ENCODE measurements at regions of chr11 and their contacts with region 1.

Region 1: DNA sequence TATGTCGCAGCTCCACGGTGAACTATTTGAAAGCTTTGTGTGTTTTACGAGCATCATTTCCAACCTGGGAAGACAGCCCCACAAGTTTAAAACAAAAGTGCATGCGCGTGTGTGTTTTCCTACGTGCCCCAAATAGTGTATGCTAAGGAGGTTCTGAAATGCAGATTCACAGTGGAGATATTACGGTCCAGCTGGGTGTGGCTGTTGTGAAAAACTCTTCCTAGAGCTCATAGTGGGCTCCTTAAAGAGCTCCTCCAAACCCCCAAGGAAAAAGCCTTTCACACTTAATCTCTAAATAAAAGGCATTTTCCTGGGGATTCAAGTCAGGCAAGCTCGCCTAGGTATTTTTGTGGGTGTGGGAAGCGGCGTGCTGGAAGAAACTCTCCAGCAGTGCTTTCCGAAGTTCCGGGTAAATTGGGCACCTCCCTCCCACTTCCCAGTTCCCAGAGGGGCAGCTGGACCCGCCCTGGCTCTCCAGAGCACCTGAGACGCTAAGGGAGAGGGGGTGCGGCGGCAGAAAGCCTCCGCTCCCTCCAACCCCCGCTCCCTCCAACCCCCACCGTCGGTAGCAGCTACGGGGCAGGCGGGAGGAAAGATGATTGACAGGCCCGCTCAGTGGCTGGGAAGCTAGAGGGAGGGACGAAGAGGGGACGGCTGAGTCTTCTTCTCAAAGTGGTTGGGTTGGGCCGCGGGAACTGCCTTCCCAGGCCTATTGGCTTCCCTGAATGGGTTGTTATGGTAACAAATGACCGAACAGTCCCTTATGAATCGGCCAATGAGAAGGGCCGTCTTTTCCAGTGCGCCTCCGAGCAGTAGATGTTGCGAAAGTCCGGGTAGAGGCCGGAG is 558 bp upstream of the PCF11 start:
- DNase-seq: peak; percentile 100
- H3K4me3 ChIP-seq: peak overlapping the region; percentile 51 to 89 (median 76)
- H3K27ac ChIP-seq: peak overlapping the region; percentile 91
- H3K4me1 ChIP-seq: peaks cover 22% of the 10 kb centered on the region
- H3K27me3 ChIP-seq: no peaks in the 10 kb centered on the region
- CTCF ChIP-seq: no peak

Region 2: GRCh38 chr11:82927254-82927880 is 229.0 kb before region 1 on chr11:
- CTCF ChIA-PET with region 1: no interaction called
- dilution Hi-C with region 1: no loop called
- in situ Hi-C with region 1: no loop called
- intact Hi-C with region 1: loop called (anchors 5 kb)
- DNase-seq: peak; percentile 45
- H3K4me3 ChIP-seq: no peak overlapping the region
- H3K27ac ChIP-seq: no peak overlapping the region
- H3K4me1 ChIP-seq: no peaks in the 10 kb centered on the region
- H3K27me3 ChIP-seq: no peaks in the 10 kb centered on the region
- CTCF ChIP-seq: peak; percentile 82 to 83

Region 3: DNA sequence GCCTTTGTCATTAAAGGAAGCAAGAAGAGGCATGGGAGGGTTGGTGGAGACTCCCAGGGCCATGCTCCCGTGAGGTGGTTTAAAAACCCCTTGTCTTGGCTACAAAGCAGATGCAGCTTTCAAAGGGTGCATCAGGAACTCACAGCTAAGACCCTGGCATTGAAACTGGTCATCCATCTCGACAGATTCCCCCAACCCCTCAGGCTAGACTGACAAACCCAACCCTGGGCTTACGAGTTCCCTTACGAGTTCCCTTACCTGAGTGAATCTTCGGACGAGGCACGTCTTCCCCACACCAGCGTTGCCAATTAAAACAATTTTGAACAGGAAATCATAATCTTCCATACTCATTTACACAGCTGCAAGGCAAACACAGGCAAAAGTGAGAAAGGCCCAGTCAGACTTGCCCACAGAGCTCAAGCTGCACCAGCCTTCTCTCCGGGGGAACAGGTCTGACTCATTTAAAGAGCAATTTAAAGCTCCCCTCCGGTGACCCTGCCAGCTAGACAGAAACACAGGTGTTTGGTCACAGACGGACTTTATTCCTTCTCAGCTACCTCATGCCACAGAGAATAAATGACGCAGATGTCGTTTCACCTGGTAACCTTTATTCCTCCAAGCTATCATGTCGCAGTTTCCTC is 159.3 kb before region 1 on chr11:
- CTCF ChIA-PET with region 1: no interaction called
- dilution Hi-C with region 1: no loop called
- in situ Hi-C with region 1: no loop called
- intact Hi-C with region 1: loop called (anchors 5 kb)
- DNase-seq: peak; percentile 24
- H3K4me3 ChIP-seq: no peak overlapping the region
- H3K27ac ChIP-seq: no peak overlapping the region
- H3K4me1 ChIP-seq: peaks cover 3% of the 10 kb centered on the region
- H3K27me3 ChIP-seq: no peaks in the 10 kb centered on the region
- CTCF ChIP-seq: no peak

Region 4: DNA sequence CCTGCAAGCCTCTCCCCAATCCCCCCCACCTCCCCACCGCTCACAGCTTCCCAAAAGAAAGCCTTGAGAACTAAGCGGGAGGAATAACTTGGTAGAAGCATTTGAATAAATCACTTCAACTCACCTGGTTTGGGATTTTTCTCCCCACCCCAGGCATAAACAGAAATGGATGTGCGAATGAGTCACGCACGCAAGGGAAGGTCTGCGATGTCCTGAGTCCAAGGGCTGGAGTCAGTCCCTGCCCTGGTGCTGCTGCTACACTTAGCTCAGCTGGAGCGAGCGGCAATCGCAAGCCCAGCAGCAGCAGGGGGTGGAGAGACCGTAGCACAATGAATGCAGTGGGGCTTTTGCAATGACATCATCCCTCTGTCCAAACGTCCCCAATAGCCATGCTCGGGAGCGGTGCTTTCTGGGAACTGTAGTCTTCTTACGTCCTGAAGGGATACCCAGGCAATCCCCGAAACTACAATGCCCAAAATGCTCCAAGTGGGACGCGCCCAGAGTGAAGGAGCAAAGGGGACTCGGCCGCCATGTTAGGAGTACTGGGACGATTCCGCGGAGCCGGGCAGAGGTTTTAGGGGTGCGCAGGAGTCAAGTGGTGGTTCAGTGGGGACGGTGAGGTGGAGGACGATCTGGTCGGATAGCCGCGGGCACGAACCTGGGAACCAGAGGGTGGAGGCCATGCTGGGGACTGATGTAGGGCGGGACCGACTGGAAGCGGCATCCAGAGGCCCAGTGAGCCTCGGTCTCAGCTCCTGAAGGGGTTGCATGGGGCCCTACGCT is 84.6 kb before region 1 on chr11 and contains the start of gene RAB30:
- CTCF ChIA-PET with region 1: no interaction called
- dilution Hi-C with region 1: loop called (anchors 5 kb)
- in situ Hi-C with region 1: no loop called
- intact Hi-C with region 1: loop called (anchors 1 kb)
- DNase-seq: peak; percentile 100
- H3K4me3 ChIP-seq: peak within 1 kb of the TSS; percentile 83 to 92 (median 88)
- H3K27ac ChIP-seq: peak within 1 kb of the TSS; percentile 90
- H3K4me1 ChIP-seq: peaks cover 21% of the 10 kb centered on the region
- H3K27me3 ChIP-seq: no peaks in the 10 kb centered on the region
- CTCF ChIP-seq: no peak
- total RNA-seq, gene RAB30: 10.6 to 41.7 TPM

Region 5: GRCh38 chr11:83193315-83194280 is 37.2 kb after region 1 on chr11 and contains the start of gene ANKRD42:
- CTCF ChIA-PET with region 1: interaction called, 3 read pairs
- dilution Hi-C with region 1: no loop called
- in situ Hi-C with region 1: no loop called
- intact Hi-C with region 1: loop called (anchors 2 kb)
- DNase-seq: peak; percentile 94
- H3K4me3 ChIP-seq: peak within 1 kb of the TSS; percentile 65 to 84 (median 82)
- H3K27ac ChIP-seq: peak within 1 kb of the TSS; percentile 92
- H3K4me1 ChIP-seq: peaks cover 25% of the 10 kb centered on the region
- H3K27me3 ChIP-seq: no peaks in the 10 kb centered on the region
- CTCF ChIP-seq: peak in 1 of 2 donors; percentile 2
- total RNA-seq, gene ANKRD42: 9.6 to 11.5 TPM